Activated CD4-positive, alpha-beta memory T cell treated with anti-CD3 and anti-CD28 coated beads for 36 hours (primary cell): ENCODE measurements at regions of chr5 and their contacts with region 1.

Region 1: GRCh38 chr5:139262742-139263445 is 30.6 kb upstream of the MATR3 start:
- DNase-seq: peak; percentile 82
- H3K4me3 Mint-ChIP-seq: no peak overlapping the region
- H3K27ac Mint-ChIP-seq: no peak overlapping the region
- H3K4me1 Mint-ChIP-seq: no peaks in the 10 kb centered on the region
- H3K27me3 Mint-ChIP-seq: peaks cover 1% of the 10 kb centered on the region

Region 2: GRCh38 chr5:138641547-138642298 is 621.2 kb before region 1 on chr5:
- CTCF ChIA-PET with region 1: interaction called, 7 read pairs
- POLR2A ChIA-PET with region 1: no interaction called
- intact Hi-C with region 1: loop called (anchors 1 kb)
- DNase-seq: peak; percentile 86
- H3K4me3 Mint-ChIP-seq: no peak overlapping the region
- H3K27ac Mint-ChIP-seq: no peak overlapping the region
- H3K4me1 Mint-ChIP-seq: peaks cover 4% of the 10 kb centered on the region
- H3K27me3 Mint-ChIP-seq: peaks cover 66% of the 10 kb centered on the region

Region 3: DNA sequence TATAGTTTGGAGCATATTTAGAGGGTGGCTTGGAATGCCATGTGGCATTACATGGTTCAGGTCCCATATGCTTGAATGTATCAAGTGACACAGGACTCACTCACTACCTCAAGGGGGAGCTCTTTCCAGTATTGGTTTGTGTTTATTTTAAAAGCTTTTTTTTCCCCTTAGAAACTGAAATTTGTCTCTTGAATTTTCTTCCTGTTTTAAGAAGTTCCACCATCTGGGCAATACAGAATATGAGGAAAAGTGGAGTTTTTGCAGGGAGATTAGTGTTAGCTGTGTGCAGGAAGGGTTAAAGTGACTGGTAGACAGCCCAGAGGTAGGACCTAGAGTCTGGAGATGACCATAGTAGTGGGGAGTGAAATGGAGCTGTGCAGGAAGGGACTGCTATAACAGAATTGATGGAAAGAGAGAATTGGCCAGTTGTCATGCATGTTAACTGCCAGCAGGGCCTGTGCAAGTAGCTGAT is 473.1 kb before region 1 on chr5:
- CTCF ChIA-PET with region 1: interaction called, 7 read pairs
- POLR2A ChIA-PET with region 1: no interaction called
- intact Hi-C with region 1: loop called (anchors 2 kb)
- DNase-seq: no peak
- H3K4me3 Mint-ChIP-seq: no peak overlapping the region
- H3K27ac Mint-ChIP-seq: no peak overlapping the region
- H3K4me1 Mint-ChIP-seq: peaks cover 13% of the 10 kb centered on the region
- H3K27me3 Mint-ChIP-seq: peaks cover 15% of the 10 kb centered on the region

Region 4: GRCh38 chr5:138824924-138825863 is 437.7 kb before region 1 on chr5:
- CTCF ChIA-PET with region 1: interaction called, 6 read pairs
- POLR2A ChIA-PET with region 1: no interaction called
- intact Hi-C with region 1: loop called (anchors 1 kb)
- DNase-seq: no peak
- H3K4me3 Mint-ChIP-seq: no peak overlapping the region
- H3K27ac Mint-ChIP-seq: no peak overlapping the region
- H3K4me1 Mint-ChIP-seq: peaks cover 5% of the 10 kb centered on the region
- H3K27me3 Mint-ChIP-seq: peaks cover 2% of the 10 kb centered on the region

Region 5: DNA sequence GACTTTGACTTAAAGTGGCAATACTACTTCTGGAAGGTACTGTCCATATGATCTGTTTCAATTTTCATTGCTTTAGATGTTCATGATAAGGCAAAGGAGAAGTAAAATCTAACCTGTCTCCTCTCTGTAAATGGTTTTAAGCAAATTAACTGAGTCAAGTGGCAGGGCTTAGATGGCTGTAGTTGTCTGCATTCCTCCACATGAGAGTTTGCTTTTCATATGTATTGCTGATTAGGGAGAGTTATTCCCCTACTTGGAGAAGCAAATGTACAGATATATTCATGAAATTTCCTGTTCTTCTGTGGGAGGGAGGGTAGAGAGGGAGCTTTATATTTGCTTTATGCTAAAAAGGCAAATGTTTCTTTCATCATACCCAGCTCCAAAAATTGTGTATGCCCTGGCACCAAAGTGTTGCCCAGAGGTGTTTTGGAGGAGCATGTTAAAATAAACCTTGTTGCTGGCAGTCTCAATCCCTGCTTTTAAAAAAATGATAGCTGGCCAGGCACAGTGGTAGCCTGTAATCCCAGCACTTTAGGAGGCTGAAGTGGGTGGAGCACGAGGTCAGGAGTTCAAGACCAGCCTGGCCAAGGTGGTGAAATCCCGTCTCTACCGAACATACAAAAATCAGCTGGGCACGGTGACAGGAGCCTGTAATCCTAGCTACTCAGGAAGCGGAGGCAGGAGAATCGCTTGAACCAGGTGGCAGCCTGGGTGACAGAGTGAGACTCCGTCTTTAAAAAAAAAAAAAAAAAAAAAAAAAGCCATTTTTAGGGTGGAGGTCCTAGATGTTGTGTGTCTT is 384.3 kb before region 1 on chr5:
- CTCF ChIA-PET with region 1: no interaction called
- POLR2A ChIA-PET with region 1: no interaction called
- intact Hi-C with region 1: no loop called
- DNase-seq: no peak
- H3K4me3 Mint-ChIP-seq: no peak overlapping the region
- H3K27ac Mint-ChIP-seq: no peak overlapping the region
- H3K4me1 Mint-ChIP-seq: no peaks in the 10 kb centered on the region
- H3K27me3 Mint-ChIP-seq: peaks cover 4% of the 10 kb centered on the region

Region 6: DNA sequence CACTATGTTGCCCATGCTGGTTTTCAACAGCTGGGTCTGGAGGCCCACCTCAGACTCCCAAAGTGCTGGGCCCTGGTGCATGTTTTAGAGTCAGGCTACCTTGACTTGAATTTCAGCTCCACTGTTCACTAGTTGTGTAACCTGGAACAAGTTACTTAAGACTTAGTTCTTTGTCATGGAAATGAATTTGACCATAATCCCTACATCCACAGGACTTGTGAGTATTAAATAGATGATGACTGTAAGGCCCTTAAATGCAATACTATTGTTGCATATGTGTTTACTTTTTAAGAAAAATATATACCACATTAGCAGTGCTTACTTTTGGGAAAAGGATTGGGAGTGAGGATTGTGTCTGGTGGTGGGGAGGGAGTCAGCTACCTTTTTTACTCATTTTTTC is 95.2 kb after region 1 on chr5:
- CTCF ChIA-PET with region 1: no interaction called
- POLR2A ChIA-PET with region 1: no interaction called
- intact Hi-C with region 1: no loop called
- DNase-seq: no peak
- H3K4me3 Mint-ChIP-seq: no peak overlapping the region
- H3K27ac Mint-ChIP-seq: no peak overlapping the region
- H3K4me1 Mint-ChIP-seq: peaks cover 14% of the 10 kb centered on the region
- H3K27me3 Mint-ChIP-seq: no peaks in the 10 kb centered on the region

Region 7: DNA sequence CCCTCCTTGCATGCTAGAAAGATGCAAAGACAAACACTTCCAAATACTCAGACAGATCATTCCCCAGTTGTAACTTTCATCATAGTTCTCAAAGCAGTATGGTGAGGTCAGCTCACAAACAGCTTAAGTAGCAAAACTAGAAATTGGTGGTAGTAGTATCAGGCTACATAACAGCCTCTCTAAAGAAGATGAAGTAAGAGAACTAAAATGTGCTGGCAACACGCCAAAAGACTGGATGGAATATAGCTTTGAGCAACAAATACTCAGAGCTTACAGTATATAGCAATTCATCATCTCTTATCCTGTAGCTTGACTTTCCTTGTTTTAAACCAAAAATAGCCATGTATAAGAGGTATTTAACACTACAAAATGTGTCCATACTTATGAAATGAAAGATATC is 1032.5 kb after region 1 on chr5:
- CTCF ChIA-PET with region 1: no interaction called
- POLR2A ChIA-PET with region 1: no interaction called
- intact Hi-C with region 1: no loop called
- DNase-seq: peak; percentile 25
- H3K4me3 Mint-ChIP-seq: no peak overlapping the region
- H3K27ac Mint-ChIP-seq: no peak overlapping the region
- H3K4me1 Mint-ChIP-seq: peaks cover 62% of the 10 kb centered on the region
- H3K27me3 Mint-ChIP-seq: no peaks in the 10 kb centered on the region